Activated CD4-positive, alpha-beta T cell treated with anti-CD3 and anti-CD28 coated beads, Interleukin-2, amount 10 ng/mL, durations not matched to agents 24 days and 14 days (primary cell): ENCODE measurements at regions of chr19 and their contacts with region 1.

Region 1: GRCh38 chr19:12881172-12881808 is at the start of gene DNASE2:
- DNase-seq: peak; percentile 98
- H3K4me3 Mint-ChIP-seq: peak within 1 kb of the TSS; percentile 85
- H3K27ac Mint-ChIP-seq: peak within 1 kb of the TSS; percentile 84
- H3K4me1 Mint-ChIP-seq: peaks cover 20% of the 10 kb centered on the region
- H3K27me3 Mint-ChIP-seq: peaks cover 1% of the 10 kb centered on the region
- total RNA-seq, gene DNASE2: 21.5 and 22.0 TPM in 2 replicates

Region 2: DNA sequence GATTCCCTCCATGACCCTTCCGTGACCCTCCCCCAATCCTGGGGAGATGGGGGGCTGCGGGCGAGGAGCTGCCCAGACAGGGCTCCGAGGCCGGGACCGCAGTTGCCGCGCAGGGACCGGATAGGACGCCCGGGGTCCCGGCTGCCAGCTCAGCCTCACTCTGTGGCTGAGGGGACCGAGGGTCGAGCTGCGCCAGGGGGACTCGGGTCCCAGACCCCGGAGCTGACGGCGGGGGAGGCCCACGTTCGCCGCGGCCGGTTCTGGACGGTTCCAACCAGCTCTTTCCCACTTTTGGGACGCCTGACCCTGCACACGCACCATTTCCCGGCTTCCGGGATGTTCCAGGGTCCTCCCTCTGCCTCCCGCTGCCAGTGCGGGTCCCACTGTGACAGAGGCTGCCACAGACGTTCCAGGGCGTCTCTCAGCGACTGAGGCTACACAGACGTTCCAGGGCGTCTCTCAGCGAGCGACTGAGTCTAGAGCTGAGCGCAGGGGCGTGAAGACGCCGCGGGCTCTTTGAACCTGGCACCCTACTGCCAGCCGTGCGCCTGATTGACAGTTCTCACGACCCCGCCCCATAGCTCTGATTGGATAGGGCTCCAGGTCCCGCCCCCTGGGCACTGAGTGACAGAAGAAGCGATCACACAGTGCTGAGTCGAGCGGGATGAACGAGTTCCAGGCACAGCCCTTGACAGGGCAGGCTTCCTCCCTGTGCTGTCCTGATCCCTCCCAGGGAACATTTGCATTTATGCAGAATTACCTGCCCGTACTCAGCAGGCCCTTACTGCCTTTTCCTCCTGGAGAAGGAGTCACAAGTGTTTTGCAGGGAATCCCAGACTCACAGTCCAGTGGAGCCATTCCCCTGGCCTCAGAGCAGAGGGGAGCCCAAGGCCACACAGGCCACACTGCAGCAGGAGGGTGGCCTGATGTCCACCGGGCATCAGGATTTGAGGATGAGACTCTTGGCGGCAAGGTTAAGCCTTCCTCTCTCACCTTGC is 547.8 kb before region 1 on chr19 and contains the start of gene ZNF563:
- intact Hi-C with region 1: no loop called
- DNase-seq: peak; percentile 99
- H3K4me3 Mint-ChIP-seq: peak within 1 kb of the TSS; percentile 92
- H3K27ac Mint-ChIP-seq: peak within 1 kb of the TSS; percentile 97
- H3K4me1 Mint-ChIP-seq: peaks cover 32% of the 10 kb centered on the region
- H3K27me3 Mint-ChIP-seq: no peaks in the 10 kb centered on the region
- total RNA-seq, gene ZNF563: 2.9 and 3.0 TPM in 2 replicates

Region 3: DNA sequence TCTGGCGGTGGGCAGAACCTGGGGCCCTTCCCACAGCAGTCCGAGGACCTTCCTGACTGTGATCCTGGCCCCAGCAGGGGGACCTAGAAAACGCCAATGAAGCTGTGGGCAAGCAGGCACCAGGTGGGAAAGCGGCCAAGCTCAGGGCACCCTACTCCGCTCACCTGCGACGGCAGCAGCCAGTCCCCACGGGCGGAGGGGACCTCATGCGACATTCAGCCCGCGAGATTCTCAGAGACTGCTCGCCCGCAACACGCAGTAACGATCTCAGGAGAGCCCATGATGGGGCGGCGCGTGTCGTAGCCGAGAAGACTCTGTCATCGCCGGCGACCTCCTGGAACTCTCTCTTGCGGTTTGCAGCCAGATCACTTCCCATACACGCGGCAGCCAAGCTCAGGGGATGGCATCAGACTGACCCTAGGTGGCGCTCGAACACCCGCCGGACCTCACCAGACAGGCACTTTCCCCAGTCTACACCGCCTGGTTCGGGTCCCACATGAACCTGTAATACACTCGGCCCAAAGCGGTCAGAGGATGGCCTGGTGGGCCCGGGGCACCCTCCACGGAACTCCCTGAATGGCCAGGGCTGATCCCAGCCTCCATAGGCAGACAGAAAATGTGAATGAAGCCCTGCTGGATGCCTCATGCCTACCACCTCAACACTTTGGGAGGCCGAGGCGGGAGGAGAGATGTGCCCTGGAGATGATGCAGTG is 241.2 kb before region 1 on chr19:
- intact Hi-C with region 1: no loop called
- DNase-seq: peak; percentile 94
- H3K4me3 Mint-ChIP-seq: peak overlapping the region; percentile 61
- H3K27ac Mint-ChIP-seq: peak overlapping the region; percentile 60
- H3K4me1 Mint-ChIP-seq: peaks cover 12% of the 10 kb centered on the region
- H3K27me3 Mint-ChIP-seq: no peaks in the 10 kb centered on the region

Region 4: GRCh38 chr19:12965017-12965811 is 83.9 kb after region 1 on chr19:
- intact Hi-C with region 1: loop called (anchors 1 kb)
- DNase-seq: peak; percentile 95
- H3K4me3 Mint-ChIP-seq: peak overlapping the region; percentile 94
- H3K27ac Mint-ChIP-seq: peak overlapping the region; percentile 84
- H3K4me1 Mint-ChIP-seq: peaks cover 10% of the 10 kb centered on the region
- H3K27me3 Mint-ChIP-seq: peaks cover 2% of the 10 kb centered on the region